CD14-positive monocyte (primary cell): ENCODE measurements at regions of chr4 and their contacts with region 1.

Region 1: DNA sequence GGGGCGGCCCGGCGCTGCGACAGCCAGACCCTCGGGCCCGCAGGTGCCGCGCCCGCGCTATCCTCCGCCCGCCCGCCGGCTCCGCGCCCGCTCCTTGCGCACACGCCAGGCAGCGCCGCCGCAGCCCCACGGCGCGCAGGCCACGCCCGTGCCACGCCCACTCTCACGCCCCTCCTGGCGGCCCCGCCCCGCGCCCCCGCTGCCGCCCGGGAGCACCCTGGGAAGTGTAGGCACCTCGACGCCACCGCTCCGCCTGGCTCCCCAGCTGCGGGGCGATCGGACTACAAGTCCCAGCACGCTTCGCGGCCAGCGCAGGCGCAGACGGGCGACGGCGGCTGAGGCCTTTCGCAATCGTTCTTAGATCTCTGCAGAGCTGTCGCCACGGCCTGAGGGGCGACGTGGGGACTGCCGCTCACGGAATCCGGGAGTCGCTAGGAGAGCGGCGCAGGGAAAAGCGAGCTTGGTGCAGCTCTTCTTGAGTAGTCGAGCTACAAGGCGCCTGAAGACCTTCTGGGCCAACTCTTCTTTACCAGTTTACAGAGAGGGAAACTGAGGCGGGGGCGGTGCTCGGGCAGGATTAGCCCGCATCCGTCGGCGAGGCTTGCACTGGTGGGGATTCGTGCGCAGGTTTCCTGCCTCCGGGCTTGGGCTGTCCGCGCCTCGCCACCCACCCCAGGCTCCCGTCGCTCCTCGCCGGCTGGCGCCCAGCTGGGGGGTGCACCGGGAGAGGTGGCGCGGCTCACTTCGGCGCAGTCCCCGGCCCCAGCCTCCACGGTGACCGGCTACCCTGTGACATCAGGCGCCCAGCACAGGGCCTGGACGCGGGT is at the start of gene ABLIM2:
- DNase-seq: peak; percentile 98 to 99 (median 99)
- H3K4me3 ChIP-seq: peak within 1 kb of the TSS; percentile 70 to 96 (median 85)
- H3K4me3 Mint-ChIP-seq: peak within 1 kb of the TSS; percentile 97 to 100
- H3K27ac ChIP-seq: peak within 1 kb of the TSS in 1 of 2 donors; percentile 68
- H3K27ac Mint-ChIP-seq: peak within 1 kb of the TSS; percentile 84 to 95 (median 88)
- H3K4me1 ChIP-seq: peaks cover 18 to 28% of the 10 kb centered on the region in 2 donors
- H3K4me1 Mint-ChIP-seq: peaks cover 18% of the 10 kb centered on the region
- H3K27me3 ChIP-seq: peaks cover 18 to 39% of the 10 kb centered on the region in 2 donors
- H3K27me3 Mint-ChIP-seq: peaks cover 32 to 72% (median 49%) of the 10 kb centered on the region in 3 donors
- CTCF ChIP-seq: no peak
- polyA plus RNA-seq, gene ABLIM2: 0.21 TPM in 1 of 3 donors, not detected in the others

Region 2: DNA sequence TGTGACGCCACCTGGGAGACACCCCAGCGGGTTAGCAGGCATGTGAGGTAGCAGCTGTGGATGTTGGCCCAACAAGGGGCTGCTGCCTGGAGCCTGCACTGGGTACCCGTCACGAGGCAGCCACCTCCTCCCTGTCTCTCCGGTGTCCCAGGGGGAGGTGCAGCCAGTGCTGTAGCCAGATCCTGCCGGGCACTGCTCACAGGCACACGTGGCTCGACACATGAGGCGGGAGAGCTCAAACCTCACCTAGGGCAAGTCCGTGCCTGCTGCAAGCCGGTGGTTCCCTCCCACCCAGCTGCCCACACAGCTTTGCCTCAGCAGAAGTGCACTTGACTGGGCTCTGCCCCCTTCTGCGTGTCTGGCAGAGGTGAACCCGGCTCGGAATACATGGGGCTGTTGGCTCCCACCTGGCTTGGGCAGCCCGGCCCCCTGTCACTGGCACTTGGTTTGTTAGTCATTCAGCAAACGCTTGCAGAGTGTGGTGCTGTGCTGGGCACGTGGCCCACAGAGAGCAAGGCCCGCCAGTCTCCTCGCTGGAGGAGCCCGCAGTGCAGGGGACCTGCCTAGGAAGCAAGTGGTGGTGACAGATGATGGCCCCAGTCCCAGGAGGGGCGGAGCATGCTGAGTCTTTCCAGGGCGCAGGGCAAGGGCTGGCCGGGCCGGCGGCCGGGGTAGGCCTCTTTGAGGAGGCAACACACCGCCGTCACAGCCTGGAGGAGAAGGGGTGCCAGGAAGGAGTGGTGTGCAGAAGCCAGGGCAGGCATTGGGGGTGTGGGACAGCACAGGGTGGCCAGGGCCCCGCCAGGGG is 30.0 kb after region 1 on chr4:
- intact Hi-C with region 1: no loop called
- DNase-seq: no peak
- H3K4me3 ChIP-seq: no peak overlapping the region
- H3K4me3 Mint-ChIP-seq: no peak overlapping the region
- H3K27ac ChIP-seq: no peak overlapping the region
- H3K27ac Mint-ChIP-seq: peak overlapping the region in 1 of 7 donors; percentile 18
- H3K4me1 ChIP-seq: peaks cover 34 to 43% of the 10 kb centered on the region in 2 donors
- H3K4me1 Mint-ChIP-seq: peaks cover 37% of the 10 kb centered on the region
- H3K27me3 ChIP-seq: no peaks in the 10 kb centered on the region
- H3K27me3 Mint-ChIP-seq: peaks cover 0 to 13% (median 11%) of the 10 kb centered on the region in 3 donors
- CTCF ChIP-seq: no peak

Region 3: DNA sequence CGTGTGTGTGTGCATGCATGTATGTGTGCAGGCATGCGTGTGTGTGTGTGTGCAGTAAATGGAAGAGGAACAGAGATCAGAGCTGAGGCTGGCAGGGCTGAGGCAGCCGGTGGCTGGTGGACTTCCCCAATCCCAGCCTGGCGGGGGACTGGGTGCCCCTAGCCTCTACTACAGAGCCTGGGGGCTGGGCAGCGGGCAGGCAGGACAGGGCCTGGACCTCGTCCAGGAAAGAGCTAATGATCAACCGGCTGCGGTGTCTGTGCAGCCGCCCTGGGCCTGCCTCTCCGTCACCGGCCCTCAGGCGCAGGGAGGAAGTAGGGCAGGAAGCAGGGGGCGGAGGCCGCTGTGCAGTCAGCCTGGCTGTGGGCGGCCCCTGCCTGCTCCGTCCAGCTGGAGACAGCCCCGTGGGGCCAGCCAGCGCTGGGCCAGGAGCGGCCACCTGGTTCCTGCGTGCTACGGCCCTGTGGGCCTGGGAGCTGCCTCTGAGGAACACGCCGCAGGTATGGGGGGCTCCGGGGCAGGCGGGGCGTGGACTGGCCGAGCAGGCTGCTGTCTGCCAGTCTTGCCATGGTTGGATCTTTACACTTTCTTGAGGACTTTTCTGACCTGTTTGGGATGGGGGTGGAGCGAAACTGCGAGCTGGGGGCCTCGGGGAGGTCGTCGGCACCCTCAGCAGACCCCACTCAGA is 40.1 kb after region 1 on chr4 and contains the start of gene SH3TC1:
- intact Hi-C with region 1: loop called in 1 of 2 experiments (anchors 5 kb)
- DNase-seq: peak; percentile 94 to 96 (median 95)
- H3K4me3 ChIP-seq: peak within 1 kb of the TSS; percentile 56 to 94 (median 89)
- H3K4me3 Mint-ChIP-seq: peak within 1 kb of the TSS; percentile 95 to 96
- H3K27ac ChIP-seq: peak within 1 kb of the TSS; percentile 96 to 97
- H3K27ac Mint-ChIP-seq: peak within 1 kb of the TSS; percentile 95 to 99 (median 97)
- H3K4me1 ChIP-seq: peaks cover 64 to 77% of the 10 kb centered on the region in 2 donors
- H3K4me1 Mint-ChIP-seq: peaks cover 55% of the 10 kb centered on the region
- H3K27me3 ChIP-seq: no peaks in the 10 kb centered on the region
- H3K27me3 Mint-ChIP-seq: peaks cover 4 to 9% (median 4%) of the 10 kb centered on the region in 3 donors
- CTCF ChIP-seq: no peak
- polyA plus RNA-seq, gene SH3TC1: 36.9 to 85.7 (median 41.9) TPM

Region 4: DNA sequence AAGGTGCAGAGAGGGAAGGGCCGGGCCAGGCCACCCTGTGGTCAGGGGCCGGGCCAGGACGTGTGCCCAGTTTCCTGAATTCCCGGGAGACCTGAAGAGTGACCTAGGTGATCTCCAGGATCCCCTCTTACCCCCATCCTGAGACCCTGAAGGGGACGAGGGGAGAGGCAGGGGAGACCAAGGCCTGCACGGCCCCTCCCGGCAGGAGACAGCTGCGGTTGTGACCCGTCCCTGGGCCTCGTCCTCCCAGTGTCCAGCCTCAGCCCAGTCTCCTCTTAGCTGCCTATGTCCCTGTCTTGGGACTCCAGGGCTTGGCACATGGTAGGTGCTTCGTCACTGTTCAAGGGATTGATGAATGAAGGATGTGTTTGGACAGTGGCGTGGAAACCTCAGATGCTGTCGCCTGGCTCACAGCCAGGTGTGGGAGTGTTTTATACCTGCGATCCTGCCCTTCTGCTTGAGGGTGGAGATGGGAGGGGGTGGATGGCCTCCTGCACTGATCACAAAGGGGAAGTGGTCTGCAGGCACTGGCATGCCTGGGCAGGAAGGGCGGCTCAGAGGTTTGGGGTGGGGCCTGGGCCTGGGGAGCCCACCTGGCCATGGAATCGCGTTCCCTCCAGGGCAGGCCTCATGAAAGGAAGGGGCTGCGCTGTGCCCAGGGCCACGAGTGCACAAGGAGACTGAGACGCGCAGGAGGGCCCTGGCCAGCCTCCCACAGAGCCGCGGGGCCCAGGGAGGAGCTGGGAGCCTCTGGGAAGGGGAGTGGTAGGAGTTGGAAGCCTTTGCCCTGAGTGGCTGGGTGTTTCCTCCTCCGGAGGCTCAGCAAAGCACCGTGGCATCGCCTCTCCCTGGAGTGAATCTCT is 47.1 kb after region 1 on chr4:
- intact Hi-C with region 1: loop called in 1 of 2 experiments (anchors 5 kb)
- DNase-seq: peak; percentile 21 to 39 (median 25)
- H3K4me3 ChIP-seq: peak overlapping the region in 1 of 3 experiments; percentile 45
- H3K4me3 Mint-ChIP-seq: peak overlapping the region; percentile 58 to 78
- H3K27ac ChIP-seq: peak overlapping the region; percentile 28 to 62
- H3K27ac Mint-ChIP-seq: peak overlapping the region; percentile 76 to 93 (median 89)
- H3K4me1 ChIP-seq: peaks cover 95 to 99% of the 10 kb centered on the region in 2 donors
- H3K4me1 Mint-ChIP-seq: peaks cover 91% of the 10 kb centered on the region
- H3K27me3 ChIP-seq: no peaks in the 10 kb centered on the region
- H3K27me3 Mint-ChIP-seq: peaks cover 0 to 2% (median 0%) of the 10 kb centered on the region in 3 donors
- CTCF ChIP-seq: no peak

Region 5: GRCh38 chr4:8428293-8429097 is 269.6 kb after region 1 on chr4:
- intact Hi-C with region 1: loop called in 1 of 2 experiments (anchors 10 kb)
- DNase-seq: peak; percentile 76 to 88 (median 86)
- H3K4me3 ChIP-seq: peak overlapping the region; percentile 49 to 94 (median 72)
- H3K4me3 Mint-ChIP-seq: peak overlapping the region; percentile 95 to 98
- H3K27ac ChIP-seq: peak overlapping the region; percentile 44 to 83
- H3K27ac Mint-ChIP-seq: peak overlapping the region; percentile 90 to 98 (median 95)
- H3K4me1 ChIP-seq: peaks cover 14 to 21% of the 10 kb centered on the region in 2 donors
- H3K4me1 Mint-ChIP-seq: peaks cover 22% of the 10 kb centered on the region
- H3K27me3 ChIP-seq: no peaks in the 10 kb centered on the region
- H3K27me3 Mint-ChIP-seq: no peaks in the 10 kb centered on the region
- CTCF ChIP-seq: peak; percentile 38